Calu3 (cell line): ENCODE measurements at regions of chr2 and their contacts with region 1.

Region 1: DNA sequence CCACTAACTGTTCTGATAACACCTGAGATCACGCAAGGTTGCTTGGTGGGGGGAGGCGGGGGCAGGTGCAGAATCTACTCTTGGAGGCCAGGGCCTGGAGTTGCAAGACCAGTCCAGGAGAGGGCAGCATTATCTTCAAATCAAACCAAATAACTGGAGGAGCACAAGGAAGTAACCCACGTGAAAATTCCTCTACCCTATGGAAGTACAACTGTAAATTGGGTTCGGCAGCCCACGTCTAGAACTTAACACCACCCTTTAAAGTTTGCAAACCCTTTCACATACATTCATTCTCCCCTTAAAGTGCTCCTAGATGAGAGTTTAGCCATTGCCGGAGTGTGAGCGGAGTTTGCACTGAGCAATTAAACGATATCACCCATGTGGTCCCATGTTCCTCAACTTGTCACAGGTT is 19.6 kb upstream of the CXCR1 start:
- DNase-seq: peak; percentile 76
- H3K4me3 Mint-ChIP-seq: no peak overlapping the region
- H3K27ac Mint-ChIP-seq: peak overlapping the region; percentile 52
- H3K4me1 Mint-ChIP-seq: peaks cover 16% of the 10 kb centered on the region
- H3K27me3 Mint-ChIP-seq: peaks cover 24% of the 10 kb centered on the region
- CTCF ChIP-seq: peak; percentile 85

Region 2: GRCh38 chr2:217622205-217623060 is 563.9 kb before region 1 on chr2:
- CTCF ChIA-PET with region 1: no interaction called
- intact Hi-C with region 1: no loop called
- DNase-seq: no peak
- H3K4me3 Mint-ChIP-seq: no peak overlapping the region
- H3K27ac Mint-ChIP-seq: no peak overlapping the region
- H3K4me1 Mint-ChIP-seq: no peaks in the 10 kb centered on the region
- H3K27me3 Mint-ChIP-seq: no peaks in the 10 kb centered on the region
- CTCF ChIP-seq: no peak

Region 3: DNA sequence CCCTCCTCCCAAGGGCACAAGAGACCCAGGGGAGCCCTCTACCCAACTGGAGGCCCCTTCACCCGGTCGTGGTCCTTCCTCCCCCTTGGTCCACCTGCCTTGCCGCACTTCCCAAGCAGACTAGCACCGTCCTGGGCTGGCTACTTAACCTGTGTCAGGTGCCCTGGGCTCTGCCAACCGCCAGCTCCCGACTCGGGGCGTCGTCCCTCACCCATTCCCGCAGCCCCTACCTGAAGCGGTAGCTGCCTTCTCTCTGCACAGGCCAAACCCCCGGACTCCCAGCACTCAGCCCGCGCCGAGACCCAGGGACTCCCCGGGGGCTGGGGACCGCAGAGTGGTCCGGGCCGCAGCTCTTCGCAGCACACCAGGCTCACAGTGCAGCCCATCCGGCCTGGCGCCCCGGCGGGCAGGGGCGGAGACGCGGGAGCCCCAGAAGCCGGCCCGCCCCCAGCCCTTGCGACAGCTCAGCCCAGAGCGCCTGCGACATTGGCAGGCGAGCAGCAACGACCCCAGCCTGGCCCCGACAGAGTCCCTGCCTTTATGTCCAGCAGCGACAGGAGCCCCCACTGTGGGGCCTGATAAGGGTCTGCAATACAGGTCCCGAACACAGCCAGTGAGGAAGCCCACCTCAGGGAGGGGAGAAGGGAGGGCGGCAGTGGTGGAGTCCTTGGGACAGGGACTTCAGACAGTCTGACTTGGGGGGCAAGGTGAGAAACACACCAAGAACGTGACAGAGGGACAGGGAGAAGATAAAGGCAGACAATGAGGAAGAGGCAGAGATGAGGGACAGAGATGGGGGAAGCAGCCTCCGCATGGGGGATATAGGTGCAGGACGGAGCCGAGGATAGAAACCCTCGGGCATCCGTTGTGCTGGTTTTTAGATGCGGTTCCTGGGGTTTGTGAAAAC is 152.5 kb before region 1 on chr2:
- CTCF ChIA-PET with region 1: no interaction called
- intact Hi-C with region 1: no loop called
- DNase-seq: no peak
- H3K4me3 Mint-ChIP-seq: no peak overlapping the region
- H3K27ac Mint-ChIP-seq: no peak overlapping the region
- H3K4me1 Mint-ChIP-seq: no peaks in the 10 kb centered on the region
- H3K27me3 Mint-ChIP-seq: peaks cover 28% of the 10 kb centered on the region
- CTCF ChIP-seq: no peak

Region 4: DNA sequence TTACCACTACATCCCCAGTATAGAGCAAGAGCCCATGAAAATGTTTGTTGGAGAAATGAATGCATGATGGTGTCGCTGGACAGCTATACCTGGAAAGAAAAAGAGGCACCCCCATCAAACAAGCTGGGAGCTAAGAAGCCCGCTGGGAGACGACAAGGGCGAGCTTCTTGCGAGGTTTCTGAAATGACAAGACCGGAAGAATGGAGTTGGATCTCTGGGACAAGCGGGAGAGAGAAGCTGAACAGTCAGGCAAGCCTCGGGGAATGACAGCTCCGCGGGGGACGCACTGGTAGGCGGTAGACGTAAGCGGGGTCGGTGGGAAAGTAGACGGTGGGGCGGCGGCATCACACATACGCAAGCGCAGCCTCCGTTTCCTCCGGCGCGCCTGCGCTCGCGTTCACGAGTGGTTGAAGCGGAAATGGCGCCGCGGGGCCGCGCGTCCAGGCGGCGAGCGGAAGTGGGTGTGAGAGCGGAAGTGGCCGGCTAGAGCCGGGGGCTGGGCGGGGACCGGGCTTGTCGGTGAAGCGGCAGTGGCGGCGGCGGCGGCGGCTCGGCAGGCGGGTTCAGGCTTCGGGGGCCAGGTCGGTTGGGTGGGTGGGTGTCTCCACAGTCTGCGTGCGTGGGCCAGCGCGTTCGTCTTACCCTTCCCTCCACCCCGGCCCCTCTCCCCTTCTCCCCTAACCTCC is 30.5 kb after region 1 on chr2 and contains the start of gene ARPC2:
- CTCF ChIA-PET with region 1: no interaction called
- intact Hi-C with region 1: no loop called
- DNase-seq: peak; percentile 95
- H3K4me3 Mint-ChIP-seq: peak within 1 kb of the TSS; percentile 89
- H3K27ac Mint-ChIP-seq: peak within 1 kb of the TSS; percentile 96
- H3K4me1 Mint-ChIP-seq: peaks cover 52% of the 10 kb centered on the region
- H3K27me3 Mint-ChIP-seq: no peaks in the 10 kb centered on the region
- CTCF ChIP-seq: no peak
- total RNA-seq, gene ARPC2: 368 and 374 TPM in 2 replicates

Region 5: GRCh38 chr2:218229239-218229638 is 42.9 kb after region 1 on chr2:
- CTCF ChIA-PET with region 1: interaction called, 3 read pairs
- intact Hi-C with region 1: loop called (anchors 1 kb)
- DNase-seq: peak; percentile 38
- H3K4me3 Mint-ChIP-seq: peak overlapping the region; percentile 43
- H3K27ac Mint-ChIP-seq: peak overlapping the region; percentile 80
- H3K4me1 Mint-ChIP-seq: peaks cover 63% of the 10 kb centered on the region
- H3K27me3 Mint-ChIP-seq: no peaks in the 10 kb centered on the region
- CTCF ChIP-seq: no peak

Region 6: GRCh38 chr2:218245214-218245613 is 58.9 kb after region 1 on chr2:
- CTCF ChIA-PET with region 1: no interaction called
- intact Hi-C with region 1: loop called (anchors 5 kb)
- DNase-seq: no peak
- H3K4me3 Mint-ChIP-seq: no peak overlapping the region
- H3K27ac Mint-ChIP-seq: no peak overlapping the region
- H3K4me1 Mint-ChIP-seq: peaks cover 28% of the 10 kb centered on the region
- H3K27me3 Mint-ChIP-seq: no peaks in the 10 kb centered on the region
- CTCF ChIP-seq: no peak

Region 7: DNA sequence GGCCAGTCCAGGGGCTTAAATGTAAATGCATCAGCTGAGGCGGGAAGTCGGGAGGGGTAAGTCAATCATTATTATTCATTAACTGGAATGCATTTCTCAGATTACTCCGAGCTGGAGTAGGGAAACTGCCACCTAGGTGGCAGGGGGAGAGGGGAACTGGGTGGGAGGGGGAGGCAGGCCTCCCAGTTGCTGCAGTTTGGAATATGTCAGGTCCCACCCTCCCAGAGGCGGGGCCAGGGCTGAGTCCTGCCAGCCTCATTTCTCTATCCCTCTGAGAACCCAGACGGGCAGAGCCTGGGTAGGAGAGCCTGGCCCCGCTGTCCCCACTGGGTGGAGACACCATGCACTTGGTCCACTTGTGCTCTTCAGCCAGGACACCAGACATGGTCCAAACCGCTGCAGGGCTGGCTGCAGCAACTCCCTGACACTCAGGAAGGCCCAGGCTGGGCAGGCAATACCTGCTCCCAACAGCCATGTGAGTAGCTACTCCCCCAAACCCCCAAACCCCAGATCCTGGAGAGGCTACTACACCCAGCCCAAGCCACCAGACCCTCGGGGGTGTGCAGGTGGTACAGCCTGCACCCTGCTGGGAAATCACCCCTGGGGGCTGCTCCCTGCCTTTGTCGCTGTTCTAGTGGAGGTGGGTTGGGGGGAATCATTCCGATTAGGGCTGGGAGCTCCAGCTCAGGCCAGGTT is 74.5 kb after region 1 on chr2 and contains the start of gene GPBAR1:
- CTCF ChIA-PET with region 1: interaction called, 3 read pairs
- intact Hi-C with region 1: loop called (anchors 5 kb)
- DNase-seq: peak; percentile 78
- H3K4me3 Mint-ChIP-seq: no peak within 1 kb of the TSS
- H3K27ac Mint-ChIP-seq: peak within 1 kb of the TSS; percentile 44
- H3K4me1 Mint-ChIP-seq: peaks cover 19% of the 10 kb centered on the region
- H3K27me3 Mint-ChIP-seq: no peaks in the 10 kb centered on the region
- CTCF ChIP-seq: no peak
- total RNA-seq, gene GPBAR1: 1.1 and 1.5 TPM in 2 replicates

Region 8: DNA sequence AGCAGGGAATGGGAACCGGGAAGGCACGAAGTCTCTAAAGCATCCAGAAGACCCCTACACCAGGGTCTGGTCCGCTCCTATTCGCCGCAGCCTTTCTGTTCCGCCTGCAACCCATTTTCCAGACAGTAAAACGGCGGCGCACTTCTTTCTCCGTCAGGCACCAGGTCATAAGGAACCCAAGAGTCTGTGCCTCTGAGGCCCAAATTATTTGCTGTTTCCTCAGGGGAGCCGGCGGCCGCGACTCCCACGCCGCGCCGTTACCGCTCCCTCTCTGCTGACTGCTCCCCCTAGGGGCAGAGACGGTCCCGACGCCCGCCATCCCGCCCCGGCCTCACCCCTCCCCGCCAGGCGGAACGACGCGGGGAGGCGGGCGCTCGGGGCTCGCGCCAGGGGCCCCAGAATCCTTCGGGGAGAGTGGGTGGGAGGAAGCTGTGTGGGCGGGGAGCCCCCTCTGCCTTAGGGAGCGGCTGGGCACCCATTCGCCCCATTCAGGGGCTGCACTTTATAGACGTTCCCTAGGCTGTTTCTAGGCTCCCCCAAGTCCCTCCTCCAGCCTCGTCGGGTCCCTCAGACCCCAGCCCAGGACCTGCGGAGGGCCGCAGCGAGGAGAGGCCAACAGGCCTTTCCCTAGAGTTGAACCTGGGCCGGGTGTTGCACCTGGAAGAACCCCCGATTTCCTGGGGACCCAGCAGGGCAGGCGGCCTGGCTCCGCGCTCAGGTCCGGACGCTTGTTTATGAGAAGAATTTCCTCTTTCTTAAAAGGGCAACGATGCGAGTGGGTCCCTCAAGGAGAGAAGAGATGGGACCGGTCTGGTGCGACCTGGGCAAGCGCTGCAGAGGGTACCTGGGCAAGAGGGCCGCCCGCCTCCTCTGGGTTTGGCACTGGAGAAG is 209.7 kb after region 1 on chr2:
- CTCF ChIA-PET with region 1: no interaction called
- intact Hi-C with region 1: loop called (anchors 10 kb)
- DNase-seq: peak; percentile 96
- H3K4me3 Mint-ChIP-seq: peak overlapping the region; percentile 98
- H3K27ac Mint-ChIP-seq: peak overlapping the region; percentile 78
- H3K4me1 Mint-ChIP-seq: peaks cover 26% of the 10 kb centered on the region
- H3K27me3 Mint-ChIP-seq: no peaks in the 10 kb centered on the region
- CTCF ChIP-seq: peak; percentile 97

Region 9: GRCh38 chr2:219002395-219003266 is 816.3 kb after region 1 on chr2:
- CTCF ChIA-PET with region 1: no interaction called
- intact Hi-C with region 1: no loop called
- DNase-seq: peak; percentile 86
- H3K4me3 Mint-ChIP-seq: peak overlapping the region; percentile 76
- H3K27ac Mint-ChIP-seq: no peak overlapping the region
- H3K4me1 Mint-ChIP-seq: peaks cover 31% of the 10 kb centered on the region
- H3K27me3 Mint-ChIP-seq: peaks cover 60% of the 10 kb centered on the region
- CTCF ChIP-seq: peak; percentile 65